A549 (cell line): ENCODE measurements at regions of chr1 and their contacts with region 1.

Region 1: DNA sequence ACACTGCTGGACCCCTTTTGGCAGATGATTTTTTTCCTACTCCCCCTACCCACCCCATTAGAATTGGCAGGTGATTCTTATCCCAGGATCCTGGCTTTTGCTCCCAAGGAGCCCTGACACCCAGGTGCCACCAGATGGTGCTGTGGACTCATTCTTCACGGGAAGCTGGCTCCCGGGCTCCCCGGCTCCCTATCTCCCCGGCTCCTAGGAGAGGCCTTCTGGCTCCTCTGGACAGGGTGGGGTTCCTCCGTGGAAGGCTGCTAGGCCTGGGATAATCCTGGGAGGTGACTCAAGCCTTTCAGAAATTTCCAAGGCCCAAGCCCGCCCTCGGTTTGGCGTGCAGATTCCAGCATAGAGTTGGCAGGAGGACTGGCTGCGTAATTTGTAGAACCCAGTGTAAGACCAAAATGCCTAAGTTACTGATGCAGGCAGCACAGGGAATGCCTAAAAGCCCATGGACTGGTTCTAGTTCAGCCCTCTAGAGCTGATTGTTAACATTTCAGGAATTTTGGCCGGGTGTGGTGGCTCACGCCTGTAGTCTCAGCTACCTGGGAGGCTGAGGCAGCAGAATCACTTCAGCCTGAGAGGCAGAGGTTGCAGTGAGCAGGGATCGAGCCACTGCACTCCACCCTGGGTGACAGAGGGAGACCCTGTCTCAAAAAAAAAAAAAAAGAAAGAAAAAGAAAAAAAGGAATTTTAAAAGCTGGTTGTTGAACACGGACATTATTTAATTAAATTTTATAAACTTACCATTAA is 6.8 kb upstream of the BSDC1 start:
- DNase-seq: peak; percentile 67 to 84
- ATAC-seq: peak; percentile 99
- H3K4me3 ChIP-seq: no peak overlapping the region
- H3K27ac ChIP-seq: peak overlapping the region; percentile 54 to 66
- H3K4me1 ChIP-seq: no peaks in the 10 kb centered on the region
- CTCF ChIP-seq: peak; percentile 72
- EP300 ChIP-seq: no peak
- POLR2A ChIP-seq: no peak
- RAD21 ChIP-seq: peak; percentile 80 to 83

Region 2: DNA sequence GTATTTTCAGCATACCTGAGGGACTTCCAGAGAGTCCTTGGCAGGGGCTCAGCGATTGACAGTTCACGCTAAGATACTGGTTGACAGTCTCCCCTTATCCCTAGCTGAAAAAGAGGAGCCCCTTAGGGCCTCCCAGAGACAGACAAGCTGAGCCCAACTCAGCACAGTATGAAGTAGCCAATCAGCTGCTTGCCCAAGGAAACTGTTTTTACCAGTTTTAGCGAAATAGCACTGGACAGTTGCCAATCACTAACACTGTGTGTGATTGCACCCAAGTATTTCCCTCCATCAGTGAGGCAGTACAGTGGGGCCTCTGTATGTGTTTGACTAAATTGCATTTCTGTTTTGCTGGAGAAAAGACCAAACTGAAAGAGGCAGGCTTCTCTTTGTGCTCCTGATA is 360.3 kb before region 1 on chr1:
- CTCF ChIA-PET with region 1: no interaction called
- POLR2A ChIA-PET with region 1: no interaction called
- DNase-seq: no peak
- ATAC-seq: no peak
- H3K4me3 ChIP-seq: no peak overlapping the region
- H3K27ac ChIP-seq: no peak overlapping the region
- H3K4me1 ChIP-seq: no peaks in the 10 kb centered on the region
- CTCF ChIP-seq: no peak
- EP300 ChIP-seq: no peak
- POLR2A ChIP-seq: no peak
- RAD21 ChIP-seq: no peak

Region 3: GRCh38 chr1:32339363-32339978 is 61.6 kb before region 1 on chr1:
- CTCF ChIA-PET with region 1: no interaction called
- POLR2A ChIA-PET with region 1: no interaction called
- DNase-seq: no peak
- ATAC-seq: no peak
- H3K4me3 ChIP-seq: no peak overlapping the region
- H3K27ac ChIP-seq: no peak overlapping the region
- H3K4me1 ChIP-seq: peaks cover 9% of the 10 kb centered on the region; the same call in 2 of the 3 replicates
- CTCF ChIP-seq: no peak
- EP300 ChIP-seq: no peak
- POLR2A ChIP-seq: no peak
- RAD21 ChIP-seq: no peak

Region 4: GRCh38 chr1:32413507-32414185 is 12.6 kb after region 1 on chr1:
- CTCF ChIA-PET with region 1: interaction called, 54 read pairs
- POLR2A ChIA-PET with region 1: no interaction called
- DNase-seq: peak; percentile 43 to 67
- ATAC-seq: peak; percentile 90 to 96
- H3K4me3 ChIP-seq: no peak overlapping the region
- H3K27ac ChIP-seq: no peak overlapping the region
- H3K4me1 ChIP-seq: no peaks in the 10 kb centered on the region
- CTCF ChIP-seq: peak; percentile 70
- EP300 ChIP-seq: no peak
- POLR2A ChIP-seq: no peak
- RAD21 ChIP-seq: peak; percentile 70 to 80; a peak in 4 of 5 replicates

Region 5: DNA sequence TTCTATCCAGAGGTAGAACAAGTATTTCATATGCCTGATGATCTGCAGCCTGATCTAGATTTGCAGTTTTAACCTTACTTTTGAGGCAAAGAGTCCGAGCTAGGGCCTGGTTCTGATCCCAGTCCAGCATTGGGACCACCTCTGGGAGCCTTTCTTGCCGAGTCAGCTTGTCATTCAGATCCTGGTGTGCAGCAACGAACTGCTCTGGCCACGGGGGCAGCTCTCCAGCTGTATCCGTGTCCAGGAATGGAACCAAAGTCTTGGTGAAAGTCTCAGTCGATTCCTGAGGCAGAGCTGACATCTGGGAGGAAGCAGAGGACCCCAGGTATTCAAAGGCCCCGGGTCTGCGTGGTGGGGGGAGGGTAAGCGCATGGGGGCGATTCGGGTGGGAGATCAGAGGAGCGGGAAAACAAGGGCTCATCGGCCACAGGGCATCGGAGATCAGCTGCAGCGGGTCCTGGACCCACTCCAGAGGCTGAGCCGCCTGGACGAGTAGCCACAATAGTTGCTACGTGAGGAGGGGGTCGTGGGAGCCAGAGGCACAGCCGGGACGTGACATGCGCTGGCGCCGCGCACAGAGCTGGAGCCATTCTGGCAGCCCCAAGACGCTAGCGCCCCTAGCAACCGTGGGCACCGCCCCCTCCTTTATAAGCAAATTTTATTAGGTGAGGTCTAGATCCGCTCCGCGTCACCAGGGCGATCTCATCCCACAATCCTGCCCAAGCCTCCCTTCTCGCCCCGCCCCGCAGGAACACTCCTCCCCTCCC is 25.6 kb after region 1 on chr1:
- CTCF ChIA-PET with region 1: interaction called, 15 read pairs
- POLR2A ChIA-PET with region 1: no interaction called
- DNase-seq: no peak
- ATAC-seq: no peak
- H3K4me3 ChIP-seq: no peak overlapping the region
- H3K27ac ChIP-seq: no peak overlapping the region
- H3K4me1 ChIP-seq: 0 out of 3 replicates have a peak, but pooled peaks cover 3% of the 10 kb centered on the region
- CTCF ChIP-seq: no peak
- EP300 ChIP-seq: no peak
- POLR2A ChIP-seq: no peak
- RAD21 ChIP-seq: no peak

Region 6: GRCh38 chr1:32448773-32449456 is 47.9 kb after region 1 on chr1:
- CTCF ChIA-PET with region 1: interaction called, 13 read pairs
- POLR2A ChIA-PET with region 1: no interaction called
- DNase-seq: peak; percentile 41 to 68
- ATAC-seq: peak; percentile 95 to 97
- H3K4me3 ChIP-seq: no peak overlapping the region
- H3K27ac ChIP-seq: no peak overlapping the region
- H3K4me1 ChIP-seq: peaks cover 5% of the 10 kb centered on the region; the same call in 2 of the 3 replicates
- CTCF ChIP-seq: peak; percentile 39; the same call in 2 of the 3 replicates
- EP300 ChIP-seq: no peak
- POLR2A ChIP-seq: no peak
- RAD21 ChIP-seq: peak; percentile 19 to 53; a peak in 2 of 5 replicates